Activated B cell treated with CpG ODN at 0.5 μM for 24 hours (primary cell): ENCODE measurements at regions of chr19 and their contacts with region 1.

Region 1: GRCh38 chr19:50817941-50818858 is 5.4 kb downstream of the KLK1 start:
- DNase-seq: peak; percentile 73
- ATAC-seq: peak; percentile 57
- H3K4me3 Mint-ChIP-seq: peak overlapping the region; percentile 88
- H3K27ac Mint-ChIP-seq: peak overlapping the region; percentile 90
- H3K4me1 Mint-ChIP-seq: peaks cover 66% of the 10 kb centered on the region
- H3K27me3 Mint-ChIP-seq: peaks cover 13% of the 10 kb centered on the region
- CTCF ChIP-seq: no peak

Region 2: GRCh38 chr19:50835785-50836542 is 17.8 kb after region 1 on chr19:
- CTCF ChIA-PET with region 1: no interaction called
- POLR2A ChIA-PET with region 1: no interaction called
- intact Hi-C with region 1: loop called (anchors 1 kb)
- DNase-seq: peak; percentile 80
- ATAC-seq: peak; percentile 94
- H3K4me3 Mint-ChIP-seq: peak overlapping the region; percentile 83
- H3K27ac Mint-ChIP-seq: peak overlapping the region; percentile 20
- H3K4me1 Mint-ChIP-seq: peaks cover 27% of the 10 kb centered on the region
- H3K27me3 Mint-ChIP-seq: peaks cover 36% of the 10 kb centered on the region
- CTCF ChIP-seq: no peak

Region 3: DNA sequence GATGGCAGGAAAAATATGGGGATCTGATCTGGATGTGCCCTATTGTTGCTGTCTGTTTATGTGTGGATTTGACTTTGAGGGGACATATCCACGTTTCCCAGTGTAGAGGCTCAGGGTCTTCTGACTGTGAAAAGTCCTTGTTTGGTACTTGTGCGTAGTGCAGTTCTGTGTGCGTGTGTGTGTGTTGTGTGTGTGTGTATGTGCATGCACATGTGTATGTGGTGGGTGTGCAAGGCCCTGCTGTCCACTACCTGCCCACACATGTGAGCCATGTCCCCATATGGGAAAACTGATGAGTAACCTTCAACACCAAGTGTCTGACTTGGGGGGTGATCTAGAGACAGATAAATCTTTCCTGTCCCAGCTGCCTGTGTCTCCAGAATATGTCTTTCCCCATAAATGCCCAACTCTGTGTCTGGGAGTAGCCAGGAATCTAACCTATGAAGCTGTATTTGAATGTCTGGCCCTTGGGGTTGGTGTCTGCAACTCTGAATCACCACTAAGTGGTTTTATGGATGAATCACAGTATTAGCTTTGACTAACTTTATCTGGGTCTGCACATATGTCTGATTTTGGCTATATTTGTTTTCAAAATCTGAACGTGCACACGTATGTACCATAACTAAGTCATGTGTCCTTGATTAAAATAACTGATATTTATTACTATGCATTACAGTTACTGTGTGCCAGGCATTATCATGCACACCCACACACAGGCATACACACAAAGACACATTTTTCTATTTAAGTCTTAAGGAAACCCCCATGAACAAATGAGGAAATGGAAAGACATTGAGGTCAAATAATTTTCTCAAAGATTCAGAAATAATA is 72.4 kb after region 1 on chr19:
- CTCF ChIA-PET with region 1: no interaction called
- POLR2A ChIA-PET with region 1: no interaction called
- intact Hi-C with region 1: loop called (anchors 1 kb)
- DNase-seq: no peak
- ATAC-seq: peak; percentile 72
- H3K4me3 Mint-ChIP-seq: peak overlapping the region; percentile 5
- H3K27ac Mint-ChIP-seq: peak overlapping the region; percentile 62
- H3K4me1 Mint-ChIP-seq: peaks cover 43% of the 10 kb centered on the region
- H3K27me3 Mint-ChIP-seq: peaks cover 4% of the 10 kb centered on the region
- CTCF ChIP-seq: no peak

Region 4: DNA sequence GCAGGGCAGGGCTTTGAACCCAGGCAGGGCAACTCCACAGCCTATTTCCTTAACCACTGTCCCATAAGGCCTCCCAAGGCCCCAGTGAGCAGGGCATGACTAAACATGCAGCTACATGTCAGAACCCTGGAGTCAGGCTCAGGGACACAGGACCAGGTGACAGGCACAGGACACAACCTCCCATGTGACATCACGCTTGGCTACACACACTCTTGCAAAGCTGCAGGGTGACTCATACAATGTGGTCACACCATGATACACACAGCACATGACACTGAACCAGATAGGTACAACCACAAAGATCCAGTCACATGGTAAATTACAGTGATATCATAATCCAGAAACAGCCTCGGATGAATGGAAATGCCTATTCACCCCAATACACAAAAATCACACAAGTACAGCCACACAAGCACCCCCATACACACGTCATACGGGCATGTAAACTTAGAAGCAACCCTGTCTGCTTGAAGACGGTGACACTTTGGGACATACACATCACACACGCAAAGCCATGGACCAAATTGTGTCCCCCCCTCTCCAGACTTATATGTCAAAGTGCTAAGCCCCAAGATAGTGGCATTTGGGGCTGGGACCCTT is 78.5 kb after region 1 on chr19:
- CTCF ChIA-PET with region 1: no interaction called
- POLR2A ChIA-PET with region 1: interaction called, 3 read pairs
- intact Hi-C with region 1: loop called (anchors 1 kb)
- DNase-seq: peak; percentile 58
- ATAC-seq: peak; percentile 91
- H3K4me3 Mint-ChIP-seq: peak overlapping the region; percentile 24
- H3K27ac Mint-ChIP-seq: peak overlapping the region; percentile 85
- H3K4me1 Mint-ChIP-seq: peaks cover 51% of the 10 kb centered on the region
- H3K27me3 Mint-ChIP-seq: no peaks in the 10 kb centered on the region
- CTCF ChIP-seq: no peak

Region 5: DNA sequence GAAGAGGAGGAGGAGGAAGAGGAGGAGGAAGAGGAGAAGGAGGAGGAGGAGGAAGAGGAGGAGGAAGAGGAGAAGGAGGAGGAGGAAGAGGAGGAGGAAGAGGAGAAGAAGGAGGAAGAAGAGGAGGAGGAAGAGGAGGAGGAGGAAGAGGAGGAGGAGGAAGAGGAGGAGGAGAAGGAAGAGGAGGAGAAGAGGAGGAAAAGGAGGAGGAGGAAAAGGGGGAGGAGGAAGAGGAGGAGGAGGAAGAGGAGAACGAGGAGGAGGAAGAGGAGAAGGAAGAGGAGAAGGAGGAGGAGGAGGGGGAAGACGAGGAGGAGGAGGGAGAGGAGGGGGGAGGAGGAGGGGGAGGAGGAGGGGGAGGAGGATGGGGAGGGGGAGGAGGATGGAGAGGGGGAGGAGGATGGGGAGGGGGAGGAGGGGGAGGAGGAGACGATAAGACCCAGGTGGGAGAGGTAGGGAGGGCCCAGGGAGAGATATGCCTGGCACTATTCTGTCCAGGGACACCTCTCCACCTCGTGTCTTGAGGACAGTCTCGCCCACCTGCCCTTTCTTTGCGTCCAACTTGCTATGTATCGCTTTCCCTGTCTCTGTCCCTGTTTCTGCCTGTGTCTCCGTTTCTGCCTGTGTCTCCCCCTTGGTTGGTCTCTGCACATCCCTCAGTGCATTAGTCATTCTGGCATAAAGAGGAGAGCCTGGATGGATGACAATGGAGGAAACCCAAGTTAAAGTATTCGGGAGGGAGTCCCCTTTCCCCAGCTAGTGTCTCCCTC is 141.7 kb after region 1 on chr19:
- CTCF ChIA-PET with region 1: no interaction called
- POLR2A ChIA-PET with region 1: no interaction called
- intact Hi-C with region 1: no loop called
- DNase-seq: no peak
- ATAC-seq: no peak
- H3K4me3 Mint-ChIP-seq: no peak overlapping the region
- H3K27ac Mint-ChIP-seq: no peak overlapping the region
- H3K4me1 Mint-ChIP-seq: no peaks in the 10 kb centered on the region
- H3K27me3 Mint-ChIP-seq: peaks cover 15% of the 10 kb centered on the region
- CTCF ChIP-seq: no peak